AG04449 (cell line): ENCODE measurements at regions of chr20 and their contacts with region 1.

Region 1: GRCh38 chr20:63071541-63072181 is 64.9 kb upstream of the BHLHE23 start:
- DNase-seq: peak; percentile 7
- H3K4me3 ChIP-seq: no peak overlapping the region
- CTCF ChIP-seq: no peak

Region 2: DNA sequence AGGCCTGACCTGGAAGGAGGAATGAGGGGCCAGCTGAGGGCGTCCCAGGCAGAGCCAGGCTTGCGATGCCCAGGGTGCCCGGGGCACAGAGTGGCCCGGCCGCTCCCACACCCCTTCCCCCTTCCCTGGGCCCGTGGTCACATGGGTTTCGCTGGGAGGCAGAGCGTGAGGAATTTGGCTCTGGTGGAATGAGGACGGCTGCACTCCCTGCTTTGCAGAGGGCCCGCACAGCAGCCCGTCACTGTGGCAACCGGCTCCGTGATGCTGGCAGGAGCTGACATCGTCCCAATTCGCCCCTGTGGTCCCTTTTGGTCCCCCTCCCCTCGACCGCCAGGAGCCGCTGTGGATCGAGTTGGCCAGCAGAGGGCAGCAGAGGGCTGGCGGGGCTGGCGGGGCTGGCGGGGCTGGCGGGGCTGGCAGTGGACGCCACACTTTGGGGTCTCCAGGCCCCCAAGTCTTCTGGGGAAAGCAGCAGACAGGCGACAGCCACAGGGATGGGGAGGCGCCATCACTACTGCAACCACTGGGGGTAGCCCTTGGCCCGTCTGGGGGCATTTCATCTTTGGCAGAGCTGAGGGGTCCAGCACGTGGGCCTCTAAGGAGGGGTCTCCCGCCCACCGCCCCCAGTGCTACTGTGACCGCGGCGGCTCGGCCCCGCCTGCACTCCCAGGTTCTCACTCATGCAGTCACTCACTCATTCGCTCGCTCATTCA is 15.3 kb before region 1 on chr20:
- CTCF ChIA-PET with region 1: interaction called, 13 read pairs
- POLR2A ChIA-PET with region 1: no interaction called
- DNase-seq: no peak
- H3K4me3 ChIP-seq: no peak overlapping the region
- CTCF ChIP-seq: peak; percentile 79